ENCODE measurements at regions of chr11 and their contacts with region 1.

Region 1: GRCh38 chr11:93908689-93909088 is 58.3 kb upstream of the VSTM5 start:
- DNase-seq: no peak

Region 2: DNA sequence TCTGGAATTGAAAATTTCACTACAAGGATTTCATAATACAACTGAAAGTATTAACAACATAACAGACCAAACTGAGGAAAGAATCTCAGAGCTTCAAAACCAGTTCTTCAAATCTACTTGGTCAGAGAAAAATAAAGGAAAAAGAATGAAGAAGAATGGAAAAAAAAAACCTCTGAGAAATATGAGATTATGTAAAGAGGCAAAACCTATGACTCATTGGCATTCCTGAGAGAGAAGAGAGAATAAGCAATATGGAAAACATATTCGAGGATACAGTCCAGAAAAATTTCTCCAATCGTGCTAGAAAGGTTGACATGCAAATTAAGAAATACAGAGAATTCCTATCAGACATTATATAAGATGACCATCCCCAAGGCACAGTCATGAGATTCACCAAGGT is 516.0 kb after region 1 on chr11:
- intact Hi-C with region 1: loop called (anchors 10 kb)
- DNase-seq: no peak

Measured in cardiac septum (tissue), 1 donor.